MCF 10A (cell line): ENCODE measurements at regions of chr10 and their contacts with region 1.

Region 1: GRCh38 chr10:31490858-31491504 is 172.0 kb downstream of the ZEB1 start:
- DNase-seq: peak; percentile 57
- H3K4me3 Mint-ChIP-seq: no peak overlapping the region
- H3K27ac Mint-ChIP-seq: no peak overlapping the region
- H3K4me1 Mint-ChIP-seq: peaks cover 7% of the 10 kb centered on the region
- H3K27me3 Mint-ChIP-seq: no peaks in the 10 kb centered on the region
- CTCF ChIP-seq: peak; percentile 58

Region 2: DNA sequence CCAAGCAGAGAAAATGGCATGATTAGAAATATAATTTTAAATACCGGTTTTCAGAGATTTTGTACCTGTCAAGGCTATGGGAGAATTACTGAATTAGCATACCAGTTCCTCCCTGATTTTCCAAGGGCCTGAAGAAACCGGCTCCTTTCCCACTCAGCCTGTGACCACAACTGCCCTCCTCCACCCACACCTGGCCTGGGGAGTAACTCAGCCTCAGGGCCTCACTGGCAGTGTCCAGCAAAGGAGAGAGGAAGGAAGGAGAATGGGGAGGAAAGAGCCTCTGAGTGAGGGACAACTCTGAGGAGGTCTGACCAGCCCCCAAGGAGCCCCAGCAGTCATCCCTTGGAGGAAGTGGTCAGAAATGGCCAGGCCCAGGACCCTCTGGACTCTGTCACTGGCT is 763.5 kb before region 1 on chr10:
- CTCF ChIA-PET with region 1: no interaction called
- POLR2A ChIA-PET with region 1: no interaction called
- intact Hi-C with region 1: loop called (anchors 2 kb)
- DNase-seq: no peak
- H3K4me3 Mint-ChIP-seq: no peak overlapping the region
- H3K27ac Mint-ChIP-seq: no peak overlapping the region
- H3K4me1 Mint-ChIP-seq: no peaks in the 10 kb centered on the region
- H3K27me3 Mint-ChIP-seq: no peaks in the 10 kb centered on the region
- CTCF ChIP-seq: no peak

Region 3: GRCh38 chr10:30751678-30752331 is 739.2 kb before region 1 on chr10:
- CTCF ChIA-PET with region 1: interaction called, 8 read pairs
- POLR2A ChIA-PET with region 1: no interaction called
- intact Hi-C with region 1: loop called (anchors 10 kb)
- DNase-seq: peak; percentile 56
- H3K4me3 Mint-ChIP-seq: no peak overlapping the region
- H3K27ac Mint-ChIP-seq: no peak overlapping the region
- H3K4me1 Mint-ChIP-seq: no peaks in the 10 kb centered on the region
- H3K27me3 Mint-ChIP-seq: no peaks in the 10 kb centered on the region
- CTCF ChIP-seq: peak; percentile 77

Region 4: GRCh38 chr10:30783939-30784500 is 707.0 kb before region 1 on chr10:
- CTCF ChIA-PET with region 1: no interaction called
- POLR2A ChIA-PET with region 1: no interaction called
- intact Hi-C with region 1: loop called (anchors 2 kb)
- DNase-seq: peak; percentile 54
- H3K4me3 Mint-ChIP-seq: no peak overlapping the region
- H3K27ac Mint-ChIP-seq: no peak overlapping the region
- H3K4me1 Mint-ChIP-seq: peaks cover 24% of the 10 kb centered on the region
- H3K27me3 Mint-ChIP-seq: no peaks in the 10 kb centered on the region
- CTCF ChIP-seq: peak; percentile 73

Region 5: GRCh38 chr10:31318854-31319601 is 172.0 kb before region 1 on chr10 and contains the start of gene ZEB1:
- CTCF ChIA-PET with region 1: no interaction called
- POLR2A ChIA-PET with region 1: no interaction called
- intact Hi-C with region 1: loop called (anchors 5 kb)
- DNase-seq: peak; percentile 91
- H3K4me3 Mint-ChIP-seq: peak within 1 kb of the TSS; percentile 86
- H3K27ac Mint-ChIP-seq: peak within 1 kb of the TSS; percentile 88
- H3K4me1 Mint-ChIP-seq: peaks cover 27% of the 10 kb centered on the region
- H3K27me3 Mint-ChIP-seq: no peaks in the 10 kb centered on the region
- CTCF ChIP-seq: peak; percentile 43
- total RNA-seq, gene ZEB1: 15.1 and 20.6 TPM in 2 replicates